Activated CD4-positive, alpha-beta T cell treated with anti-CD3 and anti-CD28 coated beads for 36 hours (primary cell): ENCODE measurements at regions of chr17 and their contacts with region 1.

Region 1: GRCh38 chr17:48915459-48916282 is 7.5 kb downstream of the UBE2Z start:
- DNase-seq: peak; percentile 77
- ATAC-seq: peak; percentile 95
- H3K4me3 Mint-ChIP-seq: peak overlapping the region; percentile 73
- H3K27ac Mint-ChIP-seq: peak overlapping the region; percentile 96
- H3K4me1 Mint-ChIP-seq: peaks cover 59% of the 10 kb centered on the region
- H3K27me3 Mint-ChIP-seq: no peaks in the 10 kb centered on the region

Region 2: DNA sequence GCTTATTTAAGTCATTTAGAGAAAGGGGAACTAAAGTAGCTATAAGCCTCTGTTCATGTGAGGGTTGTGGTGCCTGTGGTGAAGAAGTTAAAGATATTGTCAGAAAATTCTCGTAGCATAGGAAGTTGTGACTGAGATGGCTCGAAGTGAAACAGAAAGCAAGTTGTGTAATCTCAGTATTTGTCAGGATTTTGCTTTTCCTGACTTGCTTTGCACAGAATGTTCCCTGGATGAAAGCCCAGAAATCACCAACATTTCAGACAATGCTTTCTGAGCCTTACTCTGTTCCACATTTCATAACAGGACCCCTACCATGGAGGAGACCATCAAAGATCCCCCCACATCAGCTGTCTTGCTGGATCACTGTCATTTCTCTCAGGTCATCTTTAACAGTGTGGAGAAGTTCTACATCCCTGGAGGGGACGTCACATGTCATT is 74.3 kb before region 1 on chr17:
- CTCF ChIA-PET with region 1: no interaction called
- POLR2A ChIA-PET with region 1: no interaction called
- intact Hi-C with region 1: loop called in 1 of 2 experiments (anchors 2 kb)
- DNase-seq: peak; percentile 64
- ATAC-seq: peak; percentile 92
- H3K4me3 Mint-ChIP-seq: peak overlapping the region; percentile 27
- H3K27ac Mint-ChIP-seq: peak overlapping the region; percentile 51
- H3K4me1 Mint-ChIP-seq: peaks cover 57% of the 10 kb centered on the region
- H3K27me3 Mint-ChIP-seq: peaks cover under 1% of the 10 kb centered on the region

Region 3: GRCh38 chr17:48944519-48945260 is 29.0 kb after region 1 on chr17 and contains the start of gene SNF8:
- CTCF ChIA-PET with region 1: interaction called, 4 read pairs
- POLR2A ChIA-PET with region 1: no interaction called
- intact Hi-C with region 1: loop called in 1 of 2 experiments (anchors 1 kb)
- DNase-seq: peak; percentile 96
- ATAC-seq: peak; percentile 95
- H3K4me3 Mint-ChIP-seq: peak within 1 kb of the TSS; percentile 92
- H3K27ac Mint-ChIP-seq: peak within 1 kb of the TSS; percentile 96
- H3K4me1 Mint-ChIP-seq: peaks cover 8% of the 10 kb centered on the region
- H3K27me3 Mint-ChIP-seq: no peaks in the 10 kb centered on the region
- total RNA-seq, gene SNF8: 59.5 to 94.0 TPM